OCI-LY7 (cell line): ENCODE measurements at regions of chr11 and their contacts with region 1.

Region 1: DNA sequence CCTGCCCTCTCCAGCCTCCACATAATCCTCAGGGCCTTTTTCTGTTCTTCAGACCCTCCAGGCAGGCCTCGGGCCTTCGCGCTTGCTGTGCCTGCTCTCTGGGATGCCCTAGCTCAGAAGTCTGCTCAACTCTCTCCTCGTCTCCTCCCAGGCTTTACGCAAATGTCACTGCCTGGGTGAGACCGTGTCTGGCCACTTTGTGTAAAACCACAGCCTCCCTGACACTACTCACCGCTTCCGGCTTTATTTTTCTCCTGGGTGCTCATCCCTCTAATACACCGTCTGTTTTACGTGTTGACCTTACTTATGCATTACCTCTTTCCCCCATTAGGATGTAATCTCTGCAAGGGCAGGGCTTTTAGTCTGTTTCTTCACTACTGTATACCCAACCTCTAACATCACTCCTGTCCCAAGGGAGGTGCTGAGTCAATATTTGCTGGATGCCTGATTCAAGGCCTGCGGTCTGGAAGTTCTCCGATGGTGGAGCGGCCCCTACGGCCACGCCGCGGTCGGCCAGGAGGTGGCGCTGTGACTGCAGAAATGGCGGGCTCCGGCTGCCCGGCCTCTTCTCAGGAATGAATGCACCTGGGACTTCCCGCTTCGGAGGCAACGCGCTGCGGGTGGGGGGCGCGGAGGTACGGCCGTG is 58.2 kb upstream of the THY1 start:
- DNase-seq: peak; percentile 58
- H3K4me3 ChIP-seq: no peak overlapping the region
- H3K27ac ChIP-seq: no peak overlapping the region
- H3K4me1 ChIP-seq: no peaks in the 10 kb centered on the region
- CTCF ChIP-seq: peak; percentile 99

Region 2: DNA sequence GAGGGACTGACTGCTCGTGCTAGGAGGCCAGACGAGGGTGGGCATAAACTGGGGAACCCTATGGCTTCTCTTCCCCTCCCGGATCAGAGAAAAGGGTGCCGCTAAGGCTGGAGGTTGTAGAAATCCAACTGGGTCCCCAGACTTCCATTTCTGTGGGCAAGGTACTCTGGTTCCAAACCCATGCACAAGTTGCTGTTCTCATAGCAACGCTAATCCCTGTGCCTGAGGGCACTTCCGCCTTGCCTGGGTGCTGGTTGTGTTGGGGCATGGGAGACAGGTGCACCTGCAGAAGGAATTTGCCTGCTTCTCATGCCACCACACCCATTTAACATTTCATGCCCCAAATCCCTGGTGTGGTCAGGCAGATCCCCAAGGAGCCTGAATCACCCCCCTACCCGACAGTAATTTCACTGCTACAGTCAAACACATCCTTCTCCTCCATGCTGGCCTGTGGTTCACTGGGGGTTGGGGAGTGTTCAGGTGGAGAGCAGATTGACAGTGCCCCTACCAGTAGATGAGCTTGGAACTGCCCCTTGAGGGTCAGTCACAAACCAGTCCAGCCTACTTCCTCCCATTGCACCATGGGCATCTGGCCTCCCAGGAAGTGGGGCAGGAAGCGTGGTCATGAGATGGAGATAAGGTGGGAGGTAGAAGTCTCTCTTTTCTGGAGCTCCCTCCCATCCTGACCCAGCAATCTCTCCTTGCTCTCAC is 372.8 kb before region 1 on chr11:
- CTCF ChIA-PET with region 1: no interaction called
- POLR2A ChIA-PET with region 1: no interaction called
- intact Hi-C with region 1: no loop called
- DNase-seq: peak; percentile 71
- H3K4me3 ChIP-seq: peak overlapping the region; percentile 93
- H3K27ac ChIP-seq: peak overlapping the region; percentile 41
- H3K4me1 ChIP-seq: peaks cover 26% of the 10 kb centered on the region
- CTCF ChIP-seq: no peak

Region 3: GRCh38 chr11:119533921-119534736 is 53.0 kb after region 1 on chr11:
- CTCF ChIA-PET with region 1: no interaction called
- POLR2A ChIA-PET with region 1: no interaction called
- intact Hi-C with region 1: loop called (anchors 1 kb)
- DNase-seq: peak; percentile 48
- H3K4me3 ChIP-seq: no peak overlapping the region
- H3K27ac ChIP-seq: no peak overlapping the region
- H3K4me1 ChIP-seq: no peaks in the 10 kb centered on the region
- CTCF ChIP-seq: peak; percentile 97

Region 4: GRCh38 chr11:120108154-120108865 is 627.2 kb after region 1 on chr11:
- CTCF ChIA-PET with region 1: no interaction called
- POLR2A ChIA-PET with region 1: no interaction called
- intact Hi-C with region 1: loop called (anchors 10 kb)
- DNase-seq: peak; percentile 63
- H3K4me3 ChIP-seq: no peak overlapping the region
- H3K27ac ChIP-seq: no peak overlapping the region
- H3K4me1 ChIP-seq: no peaks in the 10 kb centered on the region
- CTCF ChIP-seq: peak; percentile 96